Activated CD4-positive, alpha-beta T cell treated with anti-CD3 and anti-CD28 coated beads for 36 hours (primary cell): ENCODE measurements at regions of chr6 and their contacts with region 1.

Region 1: GRCh38 chr6:108896111-108896661 is 48.0 kb downstream of the ARMC2 start:
- DNase-seq: no peak
- ATAC-seq: peak; percentile 42
- H3K4me3 Mint-ChIP-seq: no peak overlapping the region
- H3K27ac Mint-ChIP-seq: no peak overlapping the region
- H3K4me1 Mint-ChIP-seq: peaks cover 13% of the 10 kb centered on the region
- H3K27me3 Mint-ChIP-seq: no peaks in the 10 kb centered on the region

Region 2: DNA sequence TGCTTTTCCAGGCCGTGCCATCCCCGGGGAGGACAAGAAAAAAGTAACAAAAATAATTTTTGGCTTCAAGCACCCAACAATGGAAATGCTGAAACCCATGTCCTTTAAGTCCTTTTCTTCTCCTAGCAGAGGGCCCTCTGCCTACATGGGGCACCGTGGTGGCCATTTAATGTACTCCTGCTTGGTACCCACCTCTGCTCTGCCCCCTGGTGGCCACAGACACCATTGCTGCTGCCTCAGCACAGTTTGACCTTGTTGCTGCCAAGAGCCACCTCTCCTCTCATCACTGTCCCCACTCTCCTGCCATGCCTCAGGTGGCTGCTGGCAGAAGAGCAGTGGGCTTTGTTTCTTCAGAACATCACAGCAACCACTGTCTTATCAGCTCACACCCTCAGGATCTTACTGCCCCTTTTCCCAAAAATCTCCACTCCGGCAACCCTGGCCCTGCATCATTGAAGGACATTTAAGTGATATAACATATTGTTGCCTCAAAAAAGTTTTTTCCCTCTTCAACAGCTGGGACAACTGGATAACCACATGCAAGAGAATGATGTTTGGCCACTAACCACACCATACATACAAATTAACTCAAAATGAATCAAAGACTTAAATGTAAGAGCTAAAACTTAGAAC is 60.9 kb before region 1 on chr6:
- CTCF ChIA-PET with region 1: interaction called, 11 read pairs
- POLR2A ChIA-PET with region 1: no interaction called
- intact Hi-C with region 1: loop called (anchors 1 to 2 kb)
- DNase-seq: peak; percentile 93
- ATAC-seq: peak; percentile 96
- H3K4me3 Mint-ChIP-seq: no peak overlapping the region
- H3K27ac Mint-ChIP-seq: no peak overlapping the region
- H3K4me1 Mint-ChIP-seq: peaks cover 20% of the 10 kb centered on the region
- H3K27me3 Mint-ChIP-seq: no peaks in the 10 kb centered on the region